IMR-90 (cell line): ENCODE measurements at regions of chr1 and their contacts with region 1.

Region 1: DNA sequence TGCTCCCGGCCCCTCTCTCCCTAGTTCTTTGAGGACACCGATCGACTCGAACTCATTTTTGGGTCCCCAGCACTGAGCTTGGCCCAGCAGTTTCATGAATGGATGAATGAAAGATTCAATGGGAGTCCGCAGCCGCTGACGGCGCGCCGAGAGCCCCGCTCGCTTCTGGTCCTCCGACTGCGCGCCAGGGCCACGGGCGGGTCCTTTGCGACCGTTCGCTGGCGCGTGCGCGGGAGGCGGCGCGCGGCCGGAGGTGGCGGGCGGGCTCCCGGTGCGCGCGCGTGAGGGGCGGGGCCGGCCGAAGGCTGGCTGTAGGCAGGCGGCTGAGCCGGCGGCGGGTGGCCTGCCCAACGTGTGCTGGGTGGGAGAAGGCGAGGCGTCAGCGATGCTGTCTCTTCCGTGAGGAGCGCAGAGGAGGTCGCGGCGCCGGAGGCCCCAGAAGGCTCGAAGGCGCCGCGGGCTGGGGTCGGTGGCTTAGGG is at the start of gene MAST2:
- DNase-seq: peak; percentile 84
- ATAC-seq: peak; percentile 91
- H3K4me3 ChIP-seq: peak within 1 kb of the TSS; percentile 71
- H3K27ac ChIP-seq: peak within 1 kb of the TSS; percentile 87
- H3K4me1 ChIP-seq: peaks cover 5% of the 10 kb centered on the region
- H3K27me3 ChIP-seq: no peaks in the 10 kb centered on the region
- CTCF ChIP-seq: no peak
- POLR2A ChIP-seq: no peak
- RAD21 ChIP-seq: no peak
- total RNA-seq, gene MAST2: 12.5 and 14.2 TPM in 2 replicates

Region 2: DNA sequence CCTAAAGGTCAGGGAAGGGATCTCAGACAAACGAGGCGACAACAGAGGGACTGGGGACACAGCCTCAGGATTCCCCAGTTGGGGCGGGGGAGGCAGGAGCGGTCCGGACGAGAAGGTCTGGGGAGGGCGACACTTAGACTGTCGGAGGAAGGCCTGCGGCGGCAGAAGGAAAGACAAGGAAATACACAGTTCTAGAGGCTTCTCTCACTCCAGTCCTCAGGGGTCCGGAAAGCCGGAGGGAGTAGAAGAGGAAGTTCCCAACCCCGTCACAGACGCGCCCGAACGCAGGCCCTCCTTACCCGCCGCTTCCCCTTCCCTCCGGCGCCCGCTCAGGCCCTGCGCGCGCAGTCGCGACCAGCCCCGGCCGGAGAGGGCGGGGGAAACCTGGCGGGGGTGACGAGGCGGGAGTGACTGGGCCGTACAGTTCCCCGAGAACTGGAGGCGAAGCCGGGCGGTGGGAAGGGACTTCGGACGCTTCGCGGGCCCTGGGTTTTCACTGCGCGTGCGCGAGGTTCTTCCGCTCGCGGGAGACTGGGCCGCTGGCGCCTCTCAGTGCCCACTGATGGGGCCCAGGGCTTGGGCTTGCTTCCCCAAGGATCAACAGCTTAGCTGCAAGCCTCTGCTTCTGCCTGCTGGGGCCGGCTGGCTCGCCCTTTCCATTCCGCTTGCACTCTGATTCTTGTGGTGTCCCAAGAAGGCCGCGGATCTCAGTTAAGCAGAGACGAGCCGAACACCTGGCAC is 52.9 kb before region 1 on chr1 and contains the start of gene IPP:
- CTCF ChIA-PET with region 1: no interaction called
- POLR2A ChIA-PET with region 1: interaction called, 3 read pairs
- dilution Hi-C with region 1: no loop called
- in situ Hi-C with region 1: no loop called
- intact Hi-C with region 1: loop called (anchors 2 kb)
- DNase-seq: peak; percentile 97
- ATAC-seq: peak; percentile 99
- H3K4me3 ChIP-seq: peak within 1 kb of the TSS; percentile 84
- H3K27ac ChIP-seq: peak within 1 kb of the TSS; percentile 86
- H3K4me1 ChIP-seq: 0 out of 2 replicates have a peak, but pooled peaks cover 1% of the 10 kb centered on the region
- H3K27me3 ChIP-seq: no peaks in the 10 kb centered on the region
- CTCF ChIP-seq: peak; percentile 31
- POLR2A ChIP-seq: peak; percentile 96
- RAD21 ChIP-seq: peak; percentile 37
- total RNA-seq, gene IPP: 10.6 and 15.8 TPM in 2 replicates

Region 3: DNA sequence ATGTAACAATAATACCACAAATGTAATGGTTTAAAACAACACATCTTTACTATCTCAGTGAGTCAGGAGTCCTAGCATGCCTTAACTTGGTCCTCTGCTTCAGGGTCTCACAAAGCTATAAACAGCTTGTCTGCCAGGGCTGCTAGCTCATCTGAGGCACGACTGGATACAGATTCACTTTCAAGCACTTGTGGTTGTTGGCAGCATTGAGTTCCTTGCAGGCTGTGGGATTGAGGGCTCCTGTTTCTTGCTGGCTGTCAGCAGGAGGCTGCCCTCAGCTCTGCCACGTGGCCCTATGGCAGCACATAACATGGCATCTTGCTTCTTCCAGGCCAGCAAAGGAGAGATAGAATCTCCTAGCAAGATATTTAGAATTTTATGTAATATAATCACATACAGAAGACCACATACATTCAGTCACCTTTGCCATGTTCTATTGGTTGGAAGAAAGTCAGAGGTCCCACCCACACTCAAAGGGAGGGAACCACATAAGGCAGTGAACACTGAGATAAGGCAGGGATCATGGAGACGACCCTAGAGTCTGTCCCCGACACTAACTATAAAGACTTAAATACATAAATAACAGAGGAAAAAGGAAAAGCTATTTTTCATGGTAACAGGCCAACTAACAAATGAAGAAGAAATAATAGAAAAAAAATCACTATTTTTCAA is 33.9 kb before region 1 on chr1:
- CTCF ChIA-PET with region 1: no interaction called
- POLR2A ChIA-PET with region 1: no interaction called
- dilution Hi-C with region 1: no loop called
- in situ Hi-C with region 1: no loop called
- intact Hi-C with region 1: loop called (anchors 5 kb)
- DNase-seq: peak; percentile 97
- ATAC-seq: peak; percentile 94
- H3K4me3 ChIP-seq: no peak overlapping the region
- H3K27ac ChIP-seq: peak overlapping the region; percentile 30; the same call in 1 of the 2 replicates
- H3K4me1 ChIP-seq: 0 out of 2 replicates have a peak, but pooled peaks cover 2% of the 10 kb centered on the region
- H3K27me3 ChIP-seq: no peaks in the 10 kb centered on the region
- CTCF ChIP-seq: no peak
- POLR2A ChIP-seq: no peak
- RAD21 ChIP-seq: no peak

Region 4: GRCh38 chr1:45789601-45790000 is 13.7 kb before region 1 on chr1:
- CTCF ChIA-PET with region 1: interaction called, 3 read pairs
- POLR2A ChIA-PET with region 1: interaction called, 10 read pairs
- dilution Hi-C with region 1: no loop called
- in situ Hi-C with region 1: no loop called
- intact Hi-C with region 1: no loop called
- DNase-seq: no peak
- ATAC-seq: no peak
- H3K4me3 ChIP-seq: no peak overlapping the region
- H3K27ac ChIP-seq: no peak overlapping the region
- H3K4me1 ChIP-seq: no peaks in the 10 kb centered on the region
- H3K27me3 ChIP-seq: peaks cover 2% of the 10 kb centered on the region; the same call in 1 of the 2 replicates
- CTCF ChIP-seq: no peak
- POLR2A ChIP-seq: no peak
- RAD21 ChIP-seq: no peak